PC-9 (cell line): ENCODE measurements at regions of chr5 and their contacts with region 1.

Region 1: DNA sequence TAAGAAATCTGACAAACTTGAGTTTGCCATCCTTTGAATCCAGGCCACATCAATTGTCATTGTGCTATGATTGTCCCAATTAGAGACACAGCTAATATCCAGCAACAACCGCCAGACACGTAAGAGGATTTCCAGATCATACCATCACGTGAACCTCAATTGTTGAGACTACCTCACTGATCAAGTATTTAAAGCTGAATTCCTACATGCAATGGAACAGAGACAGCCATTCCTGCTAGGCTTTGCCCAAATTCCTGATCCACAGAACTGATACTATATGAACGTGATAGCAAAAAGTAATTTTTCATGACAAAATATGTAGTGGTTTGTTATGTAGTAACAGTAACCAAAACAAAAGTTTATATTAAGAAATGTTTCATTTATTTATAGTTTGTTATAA is 657.7 kb downstream of the PRR16 start:
- DNase-seq: no peak
- H3K4me3 ChIP-seq: no peak overlapping the region
- H3K27ac ChIP-seq: no peak overlapping the region
- H3K4me1 ChIP-seq: no peaks in the 10 kb centered on the region
- H3K27me3 ChIP-seq: no peaks in the 10 kb centered on the region
- CTCF ChIP-seq: no peak

Region 2: GRCh38 chr5:121108725-121109124 is 13.1 kb before region 1 on chr5:
- CTCF ChIA-PET with region 1: no interaction called
- POLR2A ChIA-PET with region 1: no interaction called
- intact Hi-C with region 1: no loop called
- DNase-seq: no peak
- H3K4me3 ChIP-seq: no peak overlapping the region
- H3K27ac ChIP-seq: no peak overlapping the region
- H3K4me1 ChIP-seq: no peaks in the 10 kb centered on the region
- H3K27me3 ChIP-seq: no peaks in the 10 kb centered on the region
- CTCF ChIP-seq: no peak

Region 3: GRCh38 chr5:121189342-121190305 is 67.8 kb after region 1 on chr5:
- CTCF ChIA-PET with region 1: no interaction called
- POLR2A ChIA-PET with region 1: no interaction called
- intact Hi-C with region 1: loop called (anchors 10 kb)
- DNase-seq: no peak
- H3K4me3 ChIP-seq: no peak overlapping the region
- H3K27ac ChIP-seq: no peak overlapping the region
- H3K4me1 ChIP-seq: no peaks in the 10 kb centered on the region
- H3K27me3 ChIP-seq: no peaks in the 10 kb centered on the region
- CTCF ChIP-seq: no peak